Naive thymus-derived CD4-positive, alpha-beta T cell (primary cell): ENCODE measurements at regions of chr3 and their contacts with region 1.

Region 1: DNA sequence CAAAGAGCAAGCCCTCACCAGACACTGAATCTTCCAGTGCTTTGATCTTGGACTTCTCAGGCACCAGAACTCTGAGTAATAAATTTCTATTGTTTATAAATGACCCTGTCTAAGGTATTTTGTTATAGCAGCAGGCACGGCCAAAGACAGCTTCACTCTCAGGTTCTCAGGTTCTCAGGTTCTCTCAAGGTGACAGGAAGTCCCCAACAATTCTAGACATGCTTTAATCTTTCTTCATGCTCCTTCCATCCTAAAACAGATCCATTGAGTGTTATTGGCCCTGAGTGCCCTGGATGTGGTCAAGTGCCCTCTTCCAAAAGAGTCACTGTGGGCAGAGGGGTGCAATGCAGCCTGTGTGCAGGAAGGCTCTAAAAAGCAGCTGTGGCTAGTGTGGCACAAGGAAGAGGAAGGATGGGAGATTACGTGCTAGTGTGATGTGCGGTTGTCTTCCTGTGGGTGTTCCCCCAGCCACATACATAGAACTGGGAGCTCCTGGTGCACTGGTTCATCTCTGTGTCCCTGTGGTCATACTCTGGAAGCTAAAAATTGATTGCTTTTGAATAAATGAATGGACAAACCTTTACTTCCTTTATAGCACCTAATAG is 11.0 kb upstream of the RAB7A start:
- DNase-seq: peak in 8 of 9 donors; percentile 30 to 53 (median 44)
- ATAC-seq: peak; percentile 94
- H3K4me3 ChIP-seq: no peak overlapping the region
- H3K4me3 Mint-ChIP-seq: peak overlapping the region; percentile 9 to 77 (median 68)
- H3K27ac ChIP-seq: peak overlapping the region; percentile 48
- H3K27ac Mint-ChIP-seq: peak overlapping the region; percentile 65 to 96 (median 90)
- H3K4me1 ChIP-seq: peaks cover 0 to 21% of the 10 kb centered on the region in 2 donors
- H3K4me1 Mint-ChIP-seq: peaks cover 8 to 40% (median 27%) of the 10 kb centered on the region in 7 donors
- H3K27me3 ChIP-seq: no peaks in the 10 kb centered on the region
- H3K27me3 Mint-ChIP-seq: peaks cover 0 to under 1% (median 0%) of the 10 kb centered on the region in 5 donors

Region 2: DNA sequence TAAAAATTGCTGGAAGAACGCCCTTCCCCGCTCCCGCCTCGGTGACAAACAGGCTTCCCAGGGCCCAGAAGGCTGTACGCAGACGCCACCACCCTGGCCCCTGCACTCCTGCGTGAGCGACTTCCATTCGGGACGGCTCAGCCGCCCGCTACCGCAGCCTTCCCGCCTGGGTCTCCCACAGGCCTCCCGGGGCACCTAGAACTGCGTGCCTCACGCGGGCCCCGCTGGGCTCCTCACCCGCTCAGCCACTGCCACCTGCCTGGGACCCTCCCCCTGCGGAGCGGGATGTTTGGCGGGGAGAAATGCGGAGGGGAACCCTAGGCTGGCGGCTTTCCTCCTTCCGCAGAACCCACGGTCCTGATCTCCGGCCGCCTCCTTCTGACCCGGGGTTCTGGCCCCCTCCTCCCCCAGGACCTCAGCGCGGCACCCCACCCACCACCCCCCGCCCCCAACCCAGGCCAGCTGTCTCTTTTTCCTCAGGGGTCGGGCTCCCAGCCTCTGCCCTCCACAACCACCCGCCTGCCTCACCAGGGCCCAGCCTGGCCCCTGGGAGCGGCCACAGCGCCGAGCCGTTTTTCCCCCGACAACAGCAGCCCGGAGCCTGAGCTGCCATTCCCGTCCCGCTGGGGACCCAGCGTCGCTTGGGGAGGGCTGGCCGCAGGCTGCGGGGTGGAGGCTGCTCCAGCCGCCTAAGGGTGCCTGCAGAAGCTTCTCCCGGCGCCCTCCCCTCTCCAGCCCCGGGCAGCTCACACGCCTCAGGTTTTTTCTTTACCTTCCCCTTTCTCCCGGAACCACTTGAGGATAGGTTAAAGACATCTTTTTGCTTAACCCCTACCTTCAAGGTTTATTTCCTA is 16.6 kb before region 1 on chr3:
- CTCF ChIA-PET with region 1: no interaction called
- POLR2A ChIA-PET with region 1: interaction called, 3 read pairs
- intact Hi-C with region 1: loop called in 1 of 2 experiments (anchors 1 kb)
- DNase-seq: peak in 7 of 9 donors; percentile 5 to 36 (median 26)
- ATAC-seq: peak; percentile 72
- H3K4me3 ChIP-seq: peak overlapping the region; percentile 60
- H3K4me3 Mint-ChIP-seq: peak overlapping the region; percentile 70 to 88 (median 84)
- H3K27ac ChIP-seq: peak overlapping the region; percentile 48
- H3K27ac Mint-ChIP-seq: peak overlapping the region in 6 of 9 donors; percentile 48 to 78 (median 72)
- H3K4me1 ChIP-seq: no peaks in the 10 kb centered on the region
- H3K4me1 Mint-ChIP-seq: peaks cover 0 to 6% (median 0%) of the 10 kb centered on the region in 7 donors
- H3K27me3 ChIP-seq: no peaks in the 10 kb centered on the region
- H3K27me3 Mint-ChIP-seq: peaks cover 0 to 2% (median 0%) of the 10 kb centered on the region in 5 donors